ENCODE measurements at regions of chr12 and their contacts with region 1.

Region 1: DNA sequence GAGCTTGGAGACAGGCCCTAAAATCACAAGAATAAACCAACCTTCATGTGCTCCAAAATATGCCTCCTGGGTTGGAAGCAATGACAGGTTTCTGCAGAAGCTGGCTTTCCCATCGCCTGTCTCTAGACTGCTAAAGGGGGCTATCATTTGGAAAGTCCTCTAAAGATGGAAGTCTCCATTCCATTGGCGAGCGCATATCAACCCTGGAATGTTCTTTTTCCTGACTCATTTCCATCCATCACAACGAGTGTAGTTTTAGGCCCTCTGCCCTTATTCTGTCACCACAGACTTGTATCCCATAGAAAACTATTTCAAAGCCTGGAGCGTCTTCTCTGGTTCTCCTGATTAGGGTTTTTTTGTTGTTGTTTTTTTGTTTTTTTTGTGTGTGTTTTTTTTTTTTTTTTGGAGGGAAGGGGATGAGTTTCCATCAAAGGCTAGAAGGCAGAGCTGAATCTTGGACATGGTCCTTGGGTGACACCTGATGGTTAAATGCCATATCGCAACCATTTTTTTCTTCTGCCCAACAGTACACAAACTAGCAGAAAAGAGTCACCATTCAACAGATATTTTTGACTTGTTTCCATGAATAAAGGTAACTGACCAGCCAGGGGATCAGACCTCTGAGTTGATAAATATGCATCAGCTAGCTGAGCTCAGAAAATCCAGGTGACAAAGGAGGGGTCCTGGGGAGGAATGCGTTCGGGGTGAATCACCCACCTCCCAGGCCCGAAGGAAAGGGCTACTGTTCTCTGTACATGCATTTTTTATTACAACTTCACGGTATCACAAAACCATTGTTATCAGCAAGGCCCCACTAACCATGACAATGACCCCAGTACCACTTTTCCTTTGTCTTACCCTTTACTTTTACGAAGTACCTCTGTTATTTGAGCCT is 40.5 kb downstream of the KCNA5 start:
- DNase-seq: peak in 2 of 6 donors; percentile 7 to 34
- ATAC-seq: peak in 3 of 4 donors; percentile 81 to 88 (median 85)
- H3K4me3 ChIP-seq: no peak overlapping the region
- H3K27ac ChIP-seq: no peak overlapping the region
- H3K4me1 ChIP-seq: no peaks in the 10 kb centered on the region
- H3K27me3 ChIP-seq: no peaks in the 10 kb centered on the region
- CTCF ChIP-seq: peak; percentile 15 to 44 (median 40)

Region 2: GRCh38 chr12:4857472-4858291 is 226.5 kb before region 1 on chr12:
- intact Hi-C with region 1: loop called in 2 of 3 experiments (anchors 10 kb)
- DNase-seq: peak; percentile 51 to 85 (median 73)
- ATAC-seq: peak; percentile 89 to 92 (median 91)
- H3K4me3 ChIP-seq: peak overlapping the region in 2 of 4 donors; percentile 6 to 26
- H3K27ac ChIP-seq: no peak overlapping the region
- H3K4me1 ChIP-seq: peaks cover 0 to 4% (median 0%) of the 10 kb centered on the region in 3 donors
- H3K27me3 ChIP-seq: peaks cover 0 to 5% (median 2%) of the 10 kb centered on the region in 4 donors
- CTCF ChIP-seq: peak; percentile 75 to 86 (median 77)

Region 3: GRCh38 chr12:4933411-4933810 is 150.8 kb before region 1 on chr12:
- intact Hi-C with region 1: no loop called
- DNase-seq: no peak
- ATAC-seq: no peak
- H3K4me3 ChIP-seq: no peak overlapping the region
- H3K27ac ChIP-seq: no peak overlapping the region
- H3K4me1 ChIP-seq: no peaks in the 10 kb centered on the region
- H3K27me3 ChIP-seq: peaks cover 0 to 21% (median 4%) of the 10 kb centered on the region in 4 donors
- CTCF ChIP-seq: no peak

Region 4: DNA sequence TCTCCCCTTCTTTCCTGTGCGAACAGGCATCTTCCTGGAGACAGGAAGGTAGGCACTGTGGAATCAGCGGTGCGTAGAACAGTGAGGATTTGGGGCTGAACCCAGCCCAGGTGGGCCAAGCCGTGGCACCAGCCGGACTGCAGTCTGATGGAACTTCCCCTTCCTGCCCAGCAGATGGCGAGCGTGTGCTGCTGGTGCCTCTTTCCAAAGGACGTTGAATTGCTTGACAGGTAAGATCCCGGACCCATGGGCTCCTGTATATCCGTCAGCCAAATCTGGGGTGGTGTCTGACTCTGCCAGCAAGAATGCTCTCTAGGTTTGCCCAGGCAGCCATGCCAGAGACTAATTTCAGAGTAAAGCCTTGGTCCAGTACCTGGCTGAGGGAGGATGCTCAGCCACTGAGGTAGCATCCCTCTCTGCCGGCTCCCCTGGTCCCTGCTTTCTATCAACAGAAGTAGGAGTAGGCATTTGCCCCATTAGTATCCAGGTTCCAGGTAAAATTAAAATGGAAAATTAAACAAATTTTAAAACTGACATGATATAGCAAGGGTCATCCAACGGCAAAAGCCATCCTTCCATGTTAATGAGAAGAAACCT is 61.6 kb before region 1 on chr12:
- intact Hi-C with region 1: loop called in 1 of 3 experiments (anchors 5 kb)
- DNase-seq: peak in 4 of 6 donors; percentile 52 to 79 (median 63)
- ATAC-seq: peak; percentile 69 to 87 (median 80)
- H3K4me3 ChIP-seq: no peak overlapping the region
- H3K27ac ChIP-seq: no peak overlapping the region
- H3K4me1 ChIP-seq: no peaks in the 10 kb centered on the region
- H3K27me3 ChIP-seq: peaks cover 0 to 9% (median 3%) of the 10 kb centered on the region in 4 donors
- CTCF ChIP-seq: peak; percentile 82 to 89 (median 84)

Region 5: DNA sequence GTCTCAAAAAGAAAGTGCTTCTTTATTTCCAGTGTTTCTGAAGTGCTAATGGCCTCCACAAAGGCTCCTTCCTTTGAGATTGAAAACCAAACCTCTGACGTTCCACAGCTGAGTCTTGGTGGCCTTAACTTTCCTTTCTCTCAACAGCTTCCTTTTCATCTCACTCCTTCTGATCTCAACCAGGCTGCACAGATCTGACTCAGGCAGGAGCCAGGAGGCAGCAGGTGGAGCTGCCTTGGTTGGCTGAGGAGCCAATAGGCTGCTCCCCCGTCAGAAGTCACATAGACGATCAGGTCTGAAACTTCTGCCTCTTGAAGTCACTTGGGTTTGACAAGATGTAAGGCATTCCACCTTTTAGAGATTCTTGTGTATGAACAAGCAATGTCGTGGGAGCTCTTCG is 49.6 kb before region 1 on chr12:
- intact Hi-C with region 1: loop called in 1 of 3 experiments (anchors 5 kb)
- DNase-seq: no peak
- ATAC-seq: no peak
- H3K4me3 ChIP-seq: no peak overlapping the region
- H3K27ac ChIP-seq: no peak overlapping the region
- H3K4me1 ChIP-seq: no peaks in the 10 kb centered on the region
- H3K27me3 ChIP-seq: peaks cover 0 to 5% (median 0%) of the 10 kb centered on the region in 4 donors
- CTCF ChIP-seq: no peak

Region 6: GRCh38 chr12:5379744-5380496 is 295.7 kb after region 1 on chr12:
- intact Hi-C with region 1: no loop called
- DNase-seq: peak in 1 of 6 donors; percentile 13
- ATAC-seq: no peak
- H3K4me3 ChIP-seq: no peak overlapping the region
- H3K27ac ChIP-seq: no peak overlapping the region
- H3K4me1 ChIP-seq: no peaks in the 10 kb centered on the region
- H3K27me3 ChIP-seq: no peaks in the 10 kb centered on the region
- CTCF ChIP-seq: no peak

Measured in pancreas (tissue), 10 donors.